Left ventricle myocardium inferior (tissue), 1 donor: ENCODE measurements at regions of chr10 and their contacts with region 1.

Region 1: DNA sequence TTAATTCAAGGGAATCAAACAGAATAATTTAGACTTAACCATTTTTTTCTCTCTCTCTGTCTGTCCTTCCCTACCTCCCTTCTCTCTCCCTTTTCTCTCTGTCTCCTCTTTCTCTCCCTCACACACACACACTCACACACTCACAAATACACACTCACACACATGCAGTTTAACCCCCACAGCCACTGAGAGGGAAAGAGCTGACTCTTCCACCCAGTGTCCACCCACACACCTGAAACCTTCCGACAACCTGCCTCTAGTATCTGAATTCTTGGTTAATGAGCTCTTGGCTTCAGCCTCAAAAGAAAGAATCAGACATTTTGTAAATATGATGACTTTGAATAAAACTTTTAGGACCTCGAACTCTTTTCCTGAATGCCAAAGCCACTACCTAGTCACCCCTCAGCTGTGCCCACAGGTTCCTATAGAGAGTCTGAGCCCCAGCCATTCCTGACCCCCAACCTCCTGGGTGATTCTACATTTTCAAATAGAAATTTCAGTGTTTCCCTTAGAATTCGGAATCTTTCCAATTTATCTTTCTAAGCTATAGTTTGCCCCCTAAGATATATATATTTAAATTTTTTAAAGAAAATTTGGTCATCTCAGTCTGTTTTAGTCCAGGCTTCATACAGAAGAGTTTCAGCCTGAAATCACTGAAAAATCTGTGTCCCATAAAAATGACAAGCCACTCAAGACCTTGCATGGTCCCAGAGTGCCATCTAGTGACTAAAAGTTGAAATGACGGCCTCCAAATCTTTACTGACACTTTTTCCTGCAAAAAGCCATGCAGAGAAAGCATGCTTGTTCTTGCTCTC is 202.8 kb downstream of the IPMK start:
- DNase-seq: no peak
- H3K4me3 ChIP-seq: no peak overlapping the region
- H3K27ac ChIP-seq: no peak overlapping the region
- H3K4me1 ChIP-seq: no peaks in the 10 kb centered on the region
- H3K27me3 ChIP-seq: peaks cover 8% of the 10 kb centered on the region
- CTCF ChIP-seq: peak; percentile 73

Region 2: GRCh38 chr10:57579926-57580325 is 485.0 kb before region 1 on chr10:
- intact Hi-C with region 1: loop called (anchors 10 kb)
- DNase-seq: no peak
- H3K4me3 ChIP-seq: no peak overlapping the region
- H3K27ac ChIP-seq: no peak overlapping the region
- H3K4me1 ChIP-seq: no peaks in the 10 kb centered on the region
- H3K27me3 ChIP-seq: no peaks in the 10 kb centered on the region
- CTCF ChIP-seq: peak; percentile 58

Region 3: GRCh38 chr10:58010073-58010702 is 54.7 kb before region 1 on chr10:
- intact Hi-C with region 1: no loop called
- DNase-seq: no peak
- H3K4me3 ChIP-seq: no peak overlapping the region
- H3K27ac ChIP-seq: no peak overlapping the region
- H3K4me1 ChIP-seq: peaks cover 12% of the 10 kb centered on the region
- H3K27me3 ChIP-seq: no peaks in the 10 kb centered on the region
- CTCF ChIP-seq: no peak